CD14-positive monocyte (primary cell): ENCODE measurements at regions of chr21 and their contacts with region 1.

Region 1: DNA sequence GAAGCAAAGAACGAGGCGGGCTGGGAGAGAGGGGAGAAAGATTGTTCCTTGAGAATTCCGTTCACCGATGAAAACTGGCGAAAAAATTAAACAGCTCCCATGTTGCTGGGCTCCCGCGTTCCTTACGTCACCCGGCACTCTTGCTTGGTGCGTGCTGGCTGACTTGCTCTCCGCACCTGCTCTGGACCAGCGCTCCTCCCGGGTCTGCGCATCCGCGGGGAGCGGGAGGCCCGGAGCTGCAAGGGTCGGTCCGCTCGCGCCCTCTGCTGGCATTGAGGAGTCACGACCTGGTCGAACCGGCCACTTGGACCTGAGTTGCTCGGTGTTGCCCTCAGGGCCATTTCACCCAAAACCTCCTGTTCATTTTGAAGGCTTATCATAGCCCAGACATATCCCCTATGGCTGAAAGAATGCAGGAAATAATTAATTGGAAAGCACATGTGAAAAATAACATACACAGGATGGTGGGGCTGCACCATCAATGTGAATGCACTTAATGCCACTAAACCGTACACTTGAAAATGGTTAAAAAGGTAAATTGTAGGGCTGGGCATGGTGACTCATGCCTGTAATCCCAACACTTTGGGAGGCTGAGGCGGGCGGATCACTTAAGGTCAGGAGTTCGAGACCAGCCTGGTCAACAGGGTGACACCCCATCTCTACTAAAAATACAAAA is 98.9 kb upstream of the BACE2 start:
- DNase-seq: peak; percentile 35 to 61 (median 52)
- H3K4me3 ChIP-seq: peak overlapping the region in 2 of 3 experiments; percentile 24 to 70
- H3K4me3 Mint-ChIP-seq: peak overlapping the region in 1 of 2 donors; percentile 74
- H3K27ac ChIP-seq: no peak overlapping the region
- H3K27ac Mint-ChIP-seq: no peak overlapping the region
- H3K4me1 ChIP-seq: peaks cover 8 to 14% of the 10 kb centered on the region in 2 donors
- H3K4me1 Mint-ChIP-seq: peaks cover 13% of the 10 kb centered on the region
- H3K27me3 ChIP-seq: peaks cover 0 to 2% of the 10 kb centered on the region in 2 donors
- H3K27me3 Mint-ChIP-seq: peaks cover 8 to 19% (median 16%) of the 10 kb centered on the region in 3 donors
- CTCF ChIP-seq: peak; percentile 87

Region 2: DNA sequence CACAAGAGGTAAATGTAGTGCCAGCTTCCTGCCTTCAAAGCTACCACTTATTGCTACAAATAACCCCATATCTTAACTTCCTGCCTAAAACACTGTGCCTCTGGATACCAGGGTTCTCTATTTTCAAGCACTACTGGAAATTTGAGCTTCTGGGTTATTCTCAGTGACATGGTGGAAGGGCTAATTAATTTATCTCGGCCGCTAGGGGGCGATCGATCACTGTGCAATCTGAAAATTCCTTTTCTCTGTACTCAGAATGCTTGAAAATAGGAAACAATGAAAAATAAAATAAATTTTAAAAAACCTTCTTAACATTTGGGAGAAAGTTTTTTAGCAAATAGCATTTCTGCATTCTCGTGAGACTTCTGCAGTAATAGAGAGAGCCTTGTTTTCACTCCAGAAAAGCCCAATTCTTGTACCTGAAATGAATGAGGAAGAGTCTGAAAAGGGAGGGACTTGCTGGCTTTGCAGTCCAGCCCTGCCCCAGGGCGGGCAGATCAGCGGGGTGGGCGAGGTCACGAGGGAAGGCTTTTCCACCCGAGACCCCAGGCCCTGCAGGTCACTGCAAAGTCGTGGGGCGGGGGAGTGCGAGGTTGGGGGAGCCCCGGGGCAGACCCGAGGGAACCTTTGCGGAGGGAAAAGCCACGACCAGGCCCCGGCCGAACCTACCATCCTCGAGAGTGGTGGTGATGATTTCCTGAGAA is 925.1 kb before region 1 on chr21:
- intact Hi-C with region 1: loop called (anchors 1 to 5 kb)
- DNase-seq: peak; percentile 2 to 21 (median 19)
- H3K4me3 ChIP-seq: no peak overlapping the region
- H3K4me3 Mint-ChIP-seq: no peak overlapping the region
- H3K27ac ChIP-seq: no peak overlapping the region
- H3K27ac Mint-ChIP-seq: no peak overlapping the region
- H3K4me1 ChIP-seq: no peaks in the 10 kb centered on the region
- H3K4me1 Mint-ChIP-seq: no peaks in the 10 kb centered on the region
- H3K27me3 ChIP-seq: no peaks in the 10 kb centered on the region
- H3K27me3 Mint-ChIP-seq: peaks cover 0 to 4% (median 2%) of the 10 kb centered on the region in 3 donors
- CTCF ChIP-seq: peak; percentile 89

Region 3: GRCh38 chr21:40466893-40467501 is 602.1 kb before region 1 on chr21:
- intact Hi-C with region 1: loop called in 1 of 2 experiments (anchors 5 kb)
- DNase-seq: peak in 1 of 3 donors; percentile 4
- H3K4me3 ChIP-seq: no peak overlapping the region
- H3K4me3 Mint-ChIP-seq: no peak overlapping the region
- H3K27ac ChIP-seq: no peak overlapping the region
- H3K27ac Mint-ChIP-seq: no peak overlapping the region
- H3K4me1 ChIP-seq: peaks cover 0 to 5% of the 10 kb centered on the region in 2 donors
- H3K4me1 Mint-ChIP-seq: peaks cover 7% of the 10 kb centered on the region
- H3K27me3 ChIP-seq: no peaks in the 10 kb centered on the region
- H3K27me3 Mint-ChIP-seq: peaks cover 1 to 7% (median 2%) of the 10 kb centered on the region in 3 donors
- CTCF ChIP-seq: peak; percentile 34

Region 4: GRCh38 chr21:41086569-41086968 is 17.5 kb after region 1 on chr21:
- intact Hi-C with region 1: no loop called
- DNase-seq: no peak
- H3K4me3 ChIP-seq: no peak overlapping the region
- H3K4me3 Mint-ChIP-seq: no peak overlapping the region
- H3K27ac ChIP-seq: no peak overlapping the region
- H3K27ac Mint-ChIP-seq: no peak overlapping the region
- H3K4me1 ChIP-seq: no peaks in the 10 kb centered on the region
- H3K4me1 Mint-ChIP-seq: no peaks in the 10 kb centered on the region
- H3K27me3 ChIP-seq: no peaks in the 10 kb centered on the region
- H3K27me3 Mint-ChIP-seq: peaks cover 2 to 12% (median 2%) of the 10 kb centered on the region in 3 donors
- CTCF ChIP-seq: no peak